Ovary (tissue), 10 donors: ENCODE measurements at regions of chr4 and their contacts with region 1.

Region 1: GRCh38 chr4:4477391-4477790 is 64.5 kb downstream of the STX18 start:
- DNase-seq: no peak
- H3K4me3 ChIP-seq: no peak overlapping the region
- H3K27ac ChIP-seq: no peak overlapping the region
- H3K4me1 ChIP-seq: peaks cover 10% of the 10 kb centered on the region
- H3K27me3 ChIP-seq: no peaks in the 10 kb centered on the region
- CTCF ChIP-seq: no peak
- EP300 ChIP-seq: no peak
- POLR2A ChIP-seq: no peak

Region 2: GRCh38 chr4:4859390-4859842 is 382.0 kb after region 1 on chr4 and contains the start of gene MSX1:
- intact Hi-C with region 1: loop called in 1 of 4 experiments (anchors 5 kb)
- DNase-seq: peak; percentile 81 to 89 (median 87)
- H3K4me3 ChIP-seq: peak within 1 kb of the TSS; percentile 67
- H3K27ac ChIP-seq: no peak within 1 kb of the TSS
- H3K4me1 ChIP-seq: peaks cover 4% of the 10 kb centered on the region
- H3K27me3 ChIP-seq: no peaks in the 10 kb centered on the region
- CTCF ChIP-seq: no peak
- EP300 ChIP-seq: no peak
- POLR2A ChIP-seq: peak; percentile 60
- total RNA-seq, gene MSX1: 2.2 to 4.5 (median 4.2) TPM